ENCODE measurements at regions of chr1 and their contacts with region 1.

Region 1: GRCh38 chr1:81811757-81812371 is 11.1 kb downstream of the ADGRL2 start:
- DNase-seq: no peak
- H3K4me3 ChIP-seq: no peak overlapping the region
- H3K27ac ChIP-seq: peak overlapping the region; percentile 10 to 67 (median 13)
- H3K4me1 ChIP-seq: peaks cover 32 to 40% of the 10 kb centered on the region in 2 donors
- H3K27me3 ChIP-seq: no peaks in the 10 kb centered on the region
- CTCF ChIP-seq: peak in 5 of 6 experiments; percentile 6 to 42 (median 32)
- POLR2A ChIP-seq: no peak

Region 2: GRCh38 chr1:81887421-81888144 is 75.7 kb after region 1 on chr1:
- intact Hi-C with region 1: loop called (anchors 10 kb)
- DNase-seq: no peak
- H3K4me3 ChIP-seq: no peak overlapping the region
- H3K27ac ChIP-seq: no peak overlapping the region
- H3K4me1 ChIP-seq: peaks cover 0 to under 1% of the 10 kb centered on the region in 2 donors
- H3K27me3 ChIP-seq: no peaks in the 10 kb centered on the region
- CTCF ChIP-seq: no peak
- POLR2A ChIP-seq: no peak

Measured in thyroid gland (tissue), 4 donors.